ENCODE measurements at regions of chr6 and their contacts with region 1.

Region 1: GRCh38 chr6:53171605-53172446 is 23.2 kb upstream of the GCM1 start:
- H3K4me3 ChIP-seq: no peak overlapping the region
- H3K27ac ChIP-seq: no peak overlapping the region
- H3K4me1 ChIP-seq: no peaks in the 10 kb centered on the region
- CTCF ChIP-seq: peak; percentile 99

Region 2: DNA sequence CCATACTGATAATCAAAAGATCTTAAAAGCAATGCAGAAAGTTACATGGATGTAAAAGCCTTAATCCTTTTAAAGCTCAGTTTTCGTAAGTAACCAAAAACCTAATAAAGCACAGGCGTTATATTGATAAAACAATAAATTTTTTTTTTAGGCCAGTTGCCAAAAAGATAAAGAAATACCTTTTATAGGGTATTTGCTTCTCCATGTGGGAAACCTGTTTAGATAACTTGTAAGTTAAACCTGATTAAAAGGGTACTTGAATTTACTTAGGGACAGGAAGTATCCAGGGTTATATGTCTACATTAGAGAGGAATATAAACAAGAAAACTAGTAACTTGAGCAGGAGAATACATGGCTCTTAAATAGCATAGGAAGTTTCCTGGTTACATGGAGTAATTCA is 85.5 kb before region 1 on chr6:
- CTCF ChIA-PET with region 1: no interaction called
- POLR2A ChIA-PET with region 1: no interaction called
- H3K4me3 ChIP-seq: no peak overlapping the region
- H3K27ac ChIP-seq: 0 out of 2 replicates have a peak overlapping the region, but pooled peaks have one; percentile 17
- H3K4me1 ChIP-seq: peaks cover 7% of the 10 kb centered on the region; the same call in 1 of the 2 replicates
- CTCF ChIP-seq: no peak

Region 3: GRCh38 chr6:53189554-53189953 is 17.7 kb after region 1 on chr6:
- CTCF ChIA-PET with region 1: interaction called, 22 read pairs
- POLR2A ChIA-PET with region 1: no interaction called
- H3K4me3 ChIP-seq: no peak overlapping the region
- H3K27ac ChIP-seq: no peak overlapping the region
- H3K4me1 ChIP-seq: peaks cover 8% of the 10 kb centered on the region; the same call in 1 of the 2 replicates
- CTCF ChIP-seq: no peak

Region 4: GRCh38 chr6:53294095-53294494 is 122.3 kb after region 1 on chr6:
- CTCF ChIA-PET with region 1: interaction called, 21 read pairs
- POLR2A ChIA-PET with region 1: no interaction called
- H3K4me3 ChIP-seq: no peak overlapping the region
- H3K27ac ChIP-seq: no peak overlapping the region
- H3K4me1 ChIP-seq: no peaks in the 10 kb centered on the region; the same call in 1 of the 2 replicates
- CTCF ChIP-seq: peak; percentile 30; the same call in 1 of the 2 replicates

Region 5: DNA sequence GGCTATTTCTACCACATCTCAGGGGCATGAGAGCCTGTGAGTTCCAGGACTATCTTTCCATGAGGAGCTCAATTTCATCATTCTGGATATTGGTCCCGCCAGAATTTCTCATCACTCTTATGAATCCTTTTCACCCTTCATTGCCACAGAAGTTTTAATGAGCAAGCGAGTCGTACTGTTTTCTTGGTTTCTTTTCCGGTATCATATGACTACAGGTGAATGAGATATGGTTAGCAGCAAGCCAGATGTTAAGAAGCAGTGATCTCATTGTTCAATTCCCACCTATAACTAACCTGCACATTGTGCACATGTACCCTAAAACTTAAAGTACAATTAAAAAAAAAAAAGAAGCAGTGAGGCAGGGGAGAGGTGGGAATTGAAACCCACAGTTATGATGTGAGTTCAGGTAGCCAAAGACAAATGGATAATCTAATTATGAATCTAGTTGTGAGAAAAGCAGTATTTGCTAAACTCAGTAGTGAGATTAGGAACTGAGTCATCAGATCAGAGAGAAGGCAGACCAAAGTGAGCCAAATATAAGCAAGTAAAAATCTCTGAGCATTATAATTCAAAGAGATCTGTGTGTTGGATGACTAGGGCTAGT is 254.9 kb after region 1 on chr6:
- CTCF ChIA-PET with region 1: interaction called, 19 read pairs
- POLR2A ChIA-PET with region 1: no interaction called
- H3K4me3 ChIP-seq: no peak overlapping the region
- H3K27ac ChIP-seq: no peak overlapping the region
- H3K4me1 ChIP-seq: no peaks in the 10 kb centered on the region
- CTCF ChIP-seq: no peak

Region 6: GRCh38 chr6:53432318-53433161 is 260.7 kb after region 1 on chr6:
- CTCF ChIA-PET with region 1: interaction called, 104 read pairs
- POLR2A ChIA-PET with region 1: no interaction called
- H3K4me3 ChIP-seq: no peak overlapping the region
- H3K27ac ChIP-seq: no peak overlapping the region
- H3K4me1 ChIP-seq: no peaks in the 10 kb centered on the region
- CTCF ChIP-seq: no peak

Region 7: GRCh38 chr6:53437557-53438202 is 265.9 kb after region 1 on chr6:
- CTCF ChIA-PET with region 1: interaction called, 104 read pairs
- POLR2A ChIA-PET with region 1: no interaction called
- H3K4me3 ChIP-seq: no peak overlapping the region
- H3K27ac ChIP-seq: no peak overlapping the region
- H3K4me1 ChIP-seq: no peaks in the 10 kb centered on the region
- CTCF ChIP-seq: peak; percentile 18; the same call in 1 of the 2 replicates

Region 8: GRCh38 chr6:53484476-53485280 is 312.9 kb after region 1 on chr6:
- CTCF ChIA-PET with region 1: interaction called, 177 read pairs
- POLR2A ChIA-PET with region 1: no interaction called
- H3K4me3 ChIP-seq: no peak overlapping the region
- H3K27ac ChIP-seq: no peak overlapping the region
- H3K4me1 ChIP-seq: peaks cover 6% of the 10 kb centered on the region; the same call in 1 of the 2 replicates
- CTCF ChIP-seq: peak; percentile 70; the same call in 1 of the 2 replicates